Mammary epithelial cell (primary cell): ENCODE measurements at regions of chr22 and their contacts with region 1.

Region 1: DNA sequence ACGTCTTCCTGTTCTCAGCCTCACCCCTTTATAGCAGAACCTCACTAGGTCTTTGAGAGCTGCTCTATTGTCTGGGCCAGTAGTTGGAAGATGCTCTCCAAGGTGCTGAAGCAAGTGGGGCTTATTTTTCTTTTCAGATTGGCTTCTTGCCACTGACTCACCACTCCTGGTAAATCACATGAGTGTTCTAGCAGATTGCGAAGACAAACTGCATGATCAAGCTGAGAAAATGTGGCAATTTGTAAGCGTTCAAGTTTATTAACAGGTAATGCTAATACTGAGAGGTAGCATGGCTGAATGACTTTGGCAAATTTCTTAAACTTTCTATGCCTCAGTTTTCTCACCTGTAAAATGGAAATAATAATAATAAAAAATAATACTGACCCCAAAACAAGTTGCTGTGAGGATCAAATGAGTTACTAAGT is 59.2 kb downstream of the CACNG2 start:
- DNase-seq: peak; percentile 91
- H3K4me3 ChIP-seq: no peak overlapping the region
- H3K27ac ChIP-seq: no peak overlapping the region
- H3K4me1 ChIP-seq: peaks cover 10% of the 10 kb centered on the region
- H3K27me3 ChIP-seq: peaks cover 2% of the 10 kb centered on the region
- CTCF ChIP-seq: no peak

Region 2: DNA sequence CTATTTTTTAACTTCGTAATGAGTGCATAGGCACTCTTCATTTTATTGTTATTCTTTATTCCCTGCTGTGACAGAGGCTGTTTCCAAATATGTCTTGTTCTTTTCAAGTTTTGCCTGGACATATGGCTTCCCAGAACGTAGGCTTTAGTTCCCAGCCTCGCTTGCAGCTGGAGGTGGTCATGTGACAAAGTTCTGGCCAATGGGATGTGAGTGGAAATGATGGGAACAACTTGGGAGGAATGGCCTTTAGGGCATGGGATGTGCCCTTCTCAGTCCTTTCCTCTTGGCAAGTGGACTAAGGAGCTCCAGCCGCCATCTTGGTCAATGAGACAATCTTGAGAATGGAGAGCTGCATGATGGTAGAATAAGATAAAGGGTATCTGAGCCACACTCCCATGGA is 44.6 kb before region 1 on chr22:
- CTCF ChIA-PET with region 1: no interaction called
- dilution Hi-C with region 1: loop called (anchors 5 kb)
- in situ Hi-C with region 1: no loop called
- intact Hi-C with region 1: no loop called
- DNase-seq: no peak
- H3K4me3 ChIP-seq: no peak overlapping the region
- H3K27ac ChIP-seq: no peak overlapping the region
- H3K4me1 ChIP-seq: no peaks in the 10 kb centered on the region
- H3K27me3 ChIP-seq: peaks cover 8% of the 10 kb centered on the region
- CTCF ChIP-seq: no peak

Region 3: GRCh38 chr22:36659762-36660509 is 15.6 kb after region 1 on chr22:
- CTCF ChIA-PET with region 1: no interaction called
- dilution Hi-C with region 1: no loop called
- in situ Hi-C with region 1: no loop called
- intact Hi-C with region 1: loop called (anchors 1 kb)
- DNase-seq: peak; percentile 88
- H3K4me3 ChIP-seq: no peak overlapping the region
- H3K27ac ChIP-seq: no peak overlapping the region
- H3K4me1 ChIP-seq: peaks cover 31% of the 10 kb centered on the region
- H3K27me3 ChIP-seq: no peaks in the 10 kb centered on the region
- CTCF ChIP-seq: no peak

Region 4: DNA sequence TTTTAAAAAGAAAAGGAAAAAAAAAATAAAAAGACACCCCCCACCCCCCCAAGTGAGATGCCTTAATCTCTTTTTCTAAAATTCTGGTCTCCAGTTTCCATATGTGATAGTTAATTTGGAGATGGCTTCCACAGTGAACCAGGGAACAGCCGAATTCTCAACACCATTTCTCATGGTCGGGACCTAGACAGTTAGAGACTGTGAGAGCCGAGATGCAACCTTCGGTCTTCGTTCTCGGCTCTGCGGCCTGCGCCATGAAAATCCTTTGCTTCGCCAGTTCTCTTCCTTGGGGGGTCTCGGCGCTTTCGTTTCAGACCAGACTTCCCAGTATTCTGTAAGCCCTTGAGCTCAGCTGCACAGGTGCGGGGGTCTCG is 58.5 kb after region 1 on chr22:
- CTCF ChIA-PET with region 1: no interaction called
- dilution Hi-C with region 1: no loop called
- in situ Hi-C with region 1: no loop called
- intact Hi-C with region 1: loop called (anchors 5 kb)
- DNase-seq: no peak
- H3K4me3 ChIP-seq: no peak overlapping the region
- H3K27ac ChIP-seq: no peak overlapping the region
- H3K4me1 ChIP-seq: no peaks in the 10 kb centered on the region
- H3K27me3 ChIP-seq: peaks cover 22% of the 10 kb centered on the region
- CTCF ChIP-seq: no peak

Region 5: DNA sequence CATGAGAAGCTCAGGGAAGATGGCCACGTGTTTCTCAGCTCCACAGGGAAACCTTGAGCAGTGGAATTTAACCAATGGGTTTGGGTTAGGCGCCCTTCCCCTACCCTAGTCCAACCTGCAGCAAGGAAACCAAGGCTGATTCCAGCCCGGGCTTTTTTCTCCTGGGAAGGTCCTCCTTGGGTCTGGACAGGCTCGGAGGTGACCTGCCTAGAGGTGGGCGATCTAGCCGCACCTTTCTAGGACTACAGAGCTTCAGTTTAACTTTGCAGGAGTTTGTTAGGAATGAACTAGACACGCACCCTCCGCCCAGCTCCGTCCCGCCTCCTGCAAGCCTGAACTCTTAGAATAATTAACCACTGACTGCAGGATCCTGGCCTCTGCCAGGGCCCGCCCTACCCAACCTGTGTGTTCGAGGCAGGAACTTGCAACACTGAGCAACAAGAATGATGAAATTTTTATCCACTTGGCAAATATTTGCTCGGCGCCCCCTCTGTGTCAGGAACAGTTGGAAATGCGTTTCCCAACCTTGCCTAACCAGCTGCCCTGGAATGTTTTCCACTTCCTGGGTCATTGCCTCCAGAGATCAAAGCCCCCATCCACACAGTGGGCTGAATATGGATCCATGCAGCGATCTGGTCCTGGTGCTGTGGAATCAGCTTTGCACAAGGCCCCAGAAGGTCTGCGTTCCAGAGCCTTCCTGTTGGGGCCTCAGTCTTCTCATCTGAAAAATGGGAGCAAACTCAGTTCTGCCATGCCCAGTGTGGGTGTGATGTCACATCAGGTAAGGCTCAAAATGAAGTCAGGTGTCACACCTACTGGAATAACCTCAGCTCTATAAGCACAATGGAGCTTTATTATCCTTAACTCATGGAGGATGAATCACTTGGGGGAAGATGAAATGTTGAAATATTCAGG is 388.5 kb after region 1 on chr22:
- CTCF ChIA-PET with region 1: no interaction called
- dilution Hi-C with region 1: no loop called
- in situ Hi-C with region 1: no loop called
- intact Hi-C with region 1: loop called (anchors 5 kb)
- DNase-seq: peak; percentile 86
- H3K4me3 ChIP-seq: no peak overlapping the region
- H3K27ac ChIP-seq: peak overlapping the region; percentile 54
- H3K4me1 ChIP-seq: peaks cover 20% of the 10 kb centered on the region
- H3K27me3 ChIP-seq: no peaks in the 10 kb centered on the region
- CTCF ChIP-seq: no peak